Caki2 (cell line): ENCODE measurements at regions of chr2 and their contacts with region 1.

Region 1: GRCh38 chr2:10122386-10123280 is at the start of gene RRM2:
- DNase-seq: peak; percentile 91
- total RNA-seq, gene RRM2: 14.7 and 19.4 TPM in 2 replicates

Region 2: GRCh38 chr2:9675415-9676351 is 446.9 kb before region 1 on chr2:
- in situ Hi-C with region 1: no loop called
- DNase-seq: peak; percentile 90

Region 3: GRCh38 chr2:10003206-10004125 is 119.2 kb before region 1 on chr2:
- in situ Hi-C with region 1: no loop called
- DNase-seq: no peak

Region 4: DNA sequence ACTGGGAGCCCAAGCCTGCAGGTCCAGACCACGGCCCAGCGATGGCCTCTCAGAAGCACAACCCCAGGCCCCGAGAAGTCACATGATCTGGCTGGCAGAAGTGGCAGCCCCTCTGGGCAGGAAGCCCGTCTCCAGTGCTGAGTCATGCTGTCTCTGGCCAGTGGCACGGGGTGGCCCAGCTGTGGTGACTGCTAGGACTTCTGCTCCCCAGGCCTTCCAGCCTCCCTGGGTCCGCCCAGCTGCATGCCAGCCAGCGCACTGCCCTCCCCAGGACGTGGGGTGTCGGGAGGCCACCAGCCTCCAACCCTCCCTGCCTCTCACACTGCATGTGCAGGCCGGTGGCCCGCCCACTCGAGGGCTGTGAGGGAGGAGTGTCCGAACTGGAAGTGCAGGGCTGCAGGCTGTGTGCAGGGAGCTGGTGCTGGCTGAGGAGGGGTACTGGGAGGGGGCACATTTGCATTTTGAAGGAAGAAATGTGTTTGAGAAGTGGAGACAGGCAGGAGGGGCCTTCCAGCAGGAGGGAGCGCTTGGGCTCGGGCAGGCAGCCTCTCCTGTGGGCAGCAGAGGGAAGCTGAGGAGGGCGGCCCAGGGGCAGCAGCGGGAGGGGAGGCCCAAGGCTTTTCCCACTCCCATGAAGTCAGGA is 163.0 kb after region 1 on chr2:
- in situ Hi-C with region 1: loop called (anchors 10 kb)
- DNase-seq: peak; percentile 99

Region 5: DNA sequence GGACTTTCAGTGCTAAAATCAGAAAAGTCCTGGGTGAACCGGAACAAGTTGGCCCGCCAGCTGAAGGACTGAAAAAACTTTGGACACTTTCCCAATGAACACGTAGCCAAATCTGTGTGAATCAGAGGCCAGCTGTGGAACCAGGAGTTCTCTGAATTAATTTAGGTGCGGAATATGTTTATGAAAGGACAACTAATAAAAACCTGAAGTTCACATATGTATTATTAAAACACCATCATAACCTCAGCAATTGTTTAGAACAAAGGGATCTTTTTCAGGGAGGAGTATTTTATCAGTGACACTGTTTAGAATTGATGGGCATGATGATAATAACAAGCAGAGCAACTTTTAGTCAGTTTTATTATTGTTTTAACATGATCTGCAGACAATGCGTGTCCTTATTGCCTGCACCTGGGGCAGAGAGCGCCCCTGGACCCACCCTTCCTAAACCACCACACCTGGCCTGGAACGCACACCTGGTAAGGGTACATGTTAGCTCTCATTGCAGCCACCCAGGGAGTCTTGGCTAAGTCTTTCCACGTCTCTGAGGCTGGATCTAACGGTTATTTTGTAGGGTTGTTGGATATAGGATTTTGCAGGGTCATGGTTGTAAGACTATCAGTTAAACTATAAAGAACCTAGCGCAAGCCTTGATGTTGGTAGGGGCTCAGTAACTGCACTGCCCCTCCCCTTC is 335.4 kb after region 1 on chr2:
- in situ Hi-C with region 1: loop called (anchors 10 kb)
- DNase-seq: no peak

Region 6: GRCh38 chr2:10659898-10660568 is 537.4 kb after region 1 on chr2:
- in situ Hi-C with region 1: loop called (anchors 10 kb)
- DNase-seq: peak; percentile 46